Naive thymus-derived CD4-positive, alpha-beta T cell (primary cell): ENCODE measurements at regions of chr1 and their contacts with region 1.

Region 1: GRCh38 chr1:212432706-212433576 is at the start of gene NENF:
- DNase-seq: peak; percentile 53 to 85 (median 72)
- ATAC-seq: peak; percentile 99
- H3K4me3 ChIP-seq: peak within 1 kb of the TSS; percentile 62
- H3K4me3 Mint-ChIP-seq: peak within 1 kb of the TSS; percentile 77 to 87 (median 82)
- H3K27ac ChIP-seq: peak within 1 kb of the TSS; percentile 77
- H3K27ac Mint-ChIP-seq: peak within 1 kb of the TSS; percentile 42 to 86 (median 63)
- H3K4me1 ChIP-seq: peaks cover 9 to 21% of the 10 kb centered on the region in 2 donors
- H3K4me1 Mint-ChIP-seq: peaks cover 18 to 44% (median 30%) of the 10 kb centered on the region in 7 donors
- H3K27me3 ChIP-seq: no peaks in the 10 kb centered on the region
- H3K27me3 Mint-ChIP-seq: peaks cover 0 to 4% (median 0%) of the 10 kb centered on the region in 5 donors
- total RNA-seq, gene NENF: 16.0 to 23.5 (median 21.0) TPM

Region 2: GRCh38 chr1:212414328-212415106 is 18.4 kb before region 1 on chr1 and contains the start of gene PACC1:
- CTCF ChIA-PET with region 1: no interaction called
- POLR2A ChIA-PET with region 1: interaction called, 14 read pairs
- intact Hi-C with region 1: loop called (anchors 1 kb)
- DNase-seq: peak; percentile 77 to 89 (median 86)
- ATAC-seq: peak; percentile 98
- H3K4me3 ChIP-seq: peak within 1 kb of the TSS; percentile 98
- H3K4me3 Mint-ChIP-seq: peak within 1 kb of the TSS; percentile 87 to 100 (median 94)
- H3K27ac ChIP-seq: peak within 1 kb of the TSS; percentile 71
- H3K27ac Mint-ChIP-seq: peak within 1 kb of the TSS; percentile 74 to 94 (median 89)
- H3K4me1 ChIP-seq: peaks cover 15 to 19% of the 10 kb centered on the region in 2 donors
- H3K4me1 Mint-ChIP-seq: peaks cover 22 to 46% (median 40%) of the 10 kb centered on the region in 7 donors
- H3K27me3 ChIP-seq: no peaks in the 10 kb centered on the region
- H3K27me3 Mint-ChIP-seq: no peaks in the 10 kb centered on the region
- total RNA-seq, gene PACC1: 7.9 to 13.4 (median 12.0) TPM